ENCODE measurements at regions of chr15 and their contacts with region 1.

Region 1: DNA sequence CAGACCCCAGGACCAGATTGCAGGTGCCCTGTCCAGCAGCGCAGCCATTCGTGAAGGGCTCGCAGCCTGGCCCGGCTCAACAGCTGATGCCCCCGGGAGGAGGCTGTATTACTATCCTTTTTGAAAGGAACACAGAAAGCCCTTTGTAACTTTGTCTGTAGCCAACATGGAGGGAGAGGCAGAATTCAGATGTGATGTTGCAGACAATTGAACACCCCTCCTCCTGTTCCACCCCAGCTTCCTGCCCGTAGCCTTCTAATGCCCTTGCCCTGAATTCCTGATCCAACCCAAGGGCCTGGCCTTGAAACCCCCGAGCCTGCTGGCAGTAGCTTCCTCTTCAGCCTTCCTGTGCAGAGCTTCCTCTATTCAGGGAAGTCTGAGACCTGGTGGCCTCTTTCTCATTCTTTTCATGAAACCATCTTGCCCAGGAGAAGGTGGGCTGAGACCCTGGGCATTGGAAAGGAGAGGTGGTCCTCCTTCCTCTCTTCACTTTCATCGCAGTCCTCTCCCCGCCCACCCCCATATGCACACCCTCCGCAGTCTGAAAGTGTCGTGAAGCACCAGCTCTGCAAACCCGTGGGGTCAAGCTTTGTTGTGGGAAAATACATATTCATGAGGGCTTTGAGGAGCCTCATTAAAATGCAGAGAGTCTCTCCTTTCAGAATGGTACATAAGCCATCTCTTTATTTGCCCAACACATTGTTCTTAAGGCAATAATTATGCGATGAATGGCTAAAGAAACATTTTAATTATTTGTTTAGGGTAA is 109.2 kb downstream of the APBA2 start:
- DNase-seq: no peak
- H3K4me3 Mint-ChIP-seq: no peak overlapping the region
- H3K27ac Mint-ChIP-seq: no peak overlapping the region
- H3K4me1 Mint-ChIP-seq: peaks cover 5% of the 10 kb centered on the region
- H3K27me3 Mint-ChIP-seq: no peaks in the 10 kb centered on the region

Region 2: DNA sequence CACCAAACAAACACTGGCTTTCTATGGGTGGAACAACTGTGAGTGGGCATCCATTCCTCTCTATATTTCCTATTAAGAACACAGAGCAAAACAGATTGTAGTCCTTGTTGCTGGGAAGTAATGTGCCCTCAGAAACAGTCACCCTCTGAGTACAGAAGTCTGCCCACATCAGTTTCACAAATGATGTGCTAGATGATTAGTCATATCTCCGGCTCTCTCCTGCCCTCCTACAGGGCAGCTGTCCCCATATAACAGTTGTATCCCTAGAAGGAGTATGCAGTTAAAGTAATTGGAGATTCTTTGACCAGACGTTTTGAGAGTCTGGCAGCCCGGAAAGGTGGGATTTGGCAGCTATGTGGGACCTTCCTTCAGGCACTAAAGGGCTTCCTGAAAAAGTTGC is 50.7 kb after region 1 on chr15:
- intact Hi-C with region 1: loop called (anchors 5 kb)
- DNase-seq: no peak
- H3K4me3 Mint-ChIP-seq: no peak overlapping the region
- H3K27ac Mint-ChIP-seq: no peak overlapping the region
- H3K4me1 Mint-ChIP-seq: peaks cover 11% of the 10 kb centered on the region
- H3K27me3 Mint-ChIP-seq: peaks cover 5% of the 10 kb centered on the region

Measured in activated T-helper 2 cell treated with anti-CD3 and anti-CD28 coated beads, Interferon-gamma antibody, Interleukin-2, Interleukin-4, amounts not matched to agents 10 μg/mL and 5 μg/mL and 100 μg/mL, durations not matched to agents 14 hours and 24 hours and 36 hours (primary cell).